Pancreas (tissue), 10 donors: ENCODE measurements at regions of chr4 and their contacts with region 1.

Region 1: GRCh38 chr4:141121768-141122454 is 11.4 kb downstream of the RNF150 start:
- DNase-seq: no peak
- ATAC-seq: no peak
- H3K4me3 ChIP-seq: no peak overlapping the region
- H3K27ac ChIP-seq: no peak overlapping the region
- H3K4me1 ChIP-seq: no peaks in the 10 kb centered on the region
- H3K27me3 ChIP-seq: no peaks in the 10 kb centered on the region
- CTCF ChIP-seq: no peak

Region 2: DNA sequence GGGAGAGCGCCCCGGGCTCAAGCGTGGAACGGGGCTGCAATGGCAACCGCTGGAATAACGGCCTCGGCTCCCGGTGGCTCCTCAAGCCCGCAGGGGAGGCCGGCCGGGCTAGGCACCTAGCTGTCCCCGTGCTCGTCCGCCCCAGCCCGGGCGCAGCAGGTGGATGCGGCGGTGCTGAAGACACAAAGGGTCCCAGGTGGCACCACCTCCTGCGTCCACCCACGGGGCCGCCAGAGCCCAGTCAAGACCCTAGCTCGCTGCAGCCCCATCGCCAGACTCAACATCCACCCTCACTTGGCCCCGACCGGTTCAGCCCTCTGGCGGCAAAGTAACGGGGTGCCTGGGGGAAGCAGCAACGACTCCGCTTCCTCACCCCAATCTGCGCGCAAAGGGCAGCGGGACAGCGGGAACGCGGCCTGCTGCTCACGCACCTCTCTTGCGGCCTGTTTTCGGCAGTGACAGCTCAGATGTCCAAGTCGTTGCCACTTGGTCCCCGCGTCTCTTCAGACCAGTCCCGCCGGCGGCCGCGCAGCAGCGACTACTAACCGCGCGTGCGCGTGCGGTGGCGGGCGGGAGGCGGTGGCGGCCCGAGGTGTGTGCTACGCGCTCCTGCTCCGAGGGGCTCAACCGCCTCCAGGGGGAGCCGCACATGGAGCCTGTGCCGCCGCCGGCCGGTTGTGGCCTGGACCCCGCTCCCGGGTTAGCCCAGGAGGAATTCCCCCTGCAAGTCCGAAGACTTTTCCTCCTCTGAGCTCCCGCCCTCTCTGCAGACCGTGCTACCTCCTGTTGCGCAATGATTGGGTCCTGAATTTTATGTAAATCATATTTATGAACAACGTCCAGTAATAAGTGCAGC is 694.6 kb before region 1 on chr4 and contains the start of gene CLGN:
- intact Hi-C with region 1: no loop called
- DNase-seq: peak; percentile 65 to 91 (median 71)
- ATAC-seq: peak; percentile 94 to 97 (median 96)
- H3K4me3 ChIP-seq: peak within 1 kb of the TSS; percentile 45 to 68 (median 56)
- H3K27ac ChIP-seq: peak within 1 kb of the TSS in 2 of 4 donors; percentile 4 to 6
- H3K4me1 ChIP-seq: no peaks in the 10 kb centered on the region
- H3K27me3 ChIP-seq: no peaks in the 10 kb centered on the region
- CTCF ChIP-seq: peak in 2 of 4 donors; percentile 11 to 22
- total RNA-seq, gene CLGN: 0.65 to 3.2 (median 1.0) TPM

Region 3: DNA sequence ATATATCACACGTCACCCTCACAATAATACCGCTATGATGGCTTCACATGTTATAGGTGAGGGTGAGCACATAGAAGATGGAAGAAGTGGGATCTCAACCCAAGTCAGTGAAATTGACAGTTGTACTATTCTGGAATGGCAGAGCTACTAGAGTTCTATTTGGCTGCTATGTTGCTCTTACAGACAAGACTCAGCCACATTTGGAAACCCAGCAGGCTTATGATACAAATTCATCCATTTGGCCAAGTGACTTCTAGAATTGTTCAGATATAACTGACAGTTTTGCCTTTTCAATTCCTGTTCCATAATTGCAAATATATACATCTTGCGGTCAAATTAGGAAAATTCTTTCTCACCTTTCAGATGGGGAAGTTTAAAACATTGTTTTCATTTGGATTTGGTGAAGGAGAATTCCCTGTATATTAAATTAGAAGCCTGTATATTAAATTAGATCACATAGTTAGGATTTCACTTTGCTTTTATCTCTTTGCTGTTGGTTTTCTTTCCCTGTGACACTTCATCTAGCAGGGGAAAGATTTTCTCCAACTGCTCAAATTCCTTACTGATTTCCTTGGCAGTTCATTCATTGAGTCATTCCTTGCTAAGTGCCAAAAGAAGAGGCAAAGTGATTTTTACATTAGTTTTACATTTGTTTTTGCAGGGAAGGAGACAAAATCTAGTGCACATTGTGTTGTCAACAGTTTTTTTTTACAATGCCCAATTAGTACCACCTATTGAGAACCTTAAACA is 245.1 kb before region 1 on chr4:
- intact Hi-C with region 1: loop called in 1 of 3 experiments (anchors 10 kb)
- DNase-seq: no peak
- ATAC-seq: no peak
- H3K4me3 ChIP-seq: no peak overlapping the region
- H3K27ac ChIP-seq: no peak overlapping the region
- H3K4me1 ChIP-seq: no peaks in the 10 kb centered on the region
- H3K27me3 ChIP-seq: no peaks in the 10 kb centered on the region
- CTCF ChIP-seq: no peak